Activated CD8-positive, alpha-beta T cell treated with anti-CD3 and anti-CD28 coated beads, Interleukin-2, amount 10 ng/mL, durations not matched to agents 7 days and 5 days (primary cell): ENCODE measurements at regions of chr17 and their contacts with region 1.

Region 1: DNA sequence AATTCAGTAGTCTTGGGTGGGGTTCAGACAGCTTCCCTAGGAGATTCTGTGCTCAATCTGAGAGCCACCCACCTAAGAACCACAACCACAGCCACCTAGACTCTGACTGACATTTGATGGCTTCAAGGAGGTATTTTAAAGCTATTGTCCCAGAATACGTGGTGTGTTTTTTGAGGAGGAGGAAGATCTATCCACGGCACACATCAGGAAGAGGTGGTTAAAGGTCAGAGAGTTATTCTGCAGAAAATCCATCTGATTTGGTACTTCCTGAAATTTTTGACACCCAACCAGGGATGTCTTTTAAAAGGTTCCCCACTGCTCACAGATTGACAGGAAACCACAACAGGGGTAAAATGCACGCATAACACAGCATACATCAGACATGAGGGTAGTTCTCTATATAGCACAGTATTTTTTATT is 25.1 kb downstream of the SMARCE1 start:
- DNase-seq: peak; percentile 69
- ATAC-seq: peak; percentile 74
- H3K4me3 Mint-ChIP-seq: peak overlapping the region; percentile 20
- H3K27ac Mint-ChIP-seq: peak overlapping the region; percentile 57
- H3K4me1 Mint-ChIP-seq: peaks cover 70% of the 10 kb centered on the region
- H3K27me3 Mint-ChIP-seq: no peaks in the 10 kb centered on the region

Region 2: DNA sequence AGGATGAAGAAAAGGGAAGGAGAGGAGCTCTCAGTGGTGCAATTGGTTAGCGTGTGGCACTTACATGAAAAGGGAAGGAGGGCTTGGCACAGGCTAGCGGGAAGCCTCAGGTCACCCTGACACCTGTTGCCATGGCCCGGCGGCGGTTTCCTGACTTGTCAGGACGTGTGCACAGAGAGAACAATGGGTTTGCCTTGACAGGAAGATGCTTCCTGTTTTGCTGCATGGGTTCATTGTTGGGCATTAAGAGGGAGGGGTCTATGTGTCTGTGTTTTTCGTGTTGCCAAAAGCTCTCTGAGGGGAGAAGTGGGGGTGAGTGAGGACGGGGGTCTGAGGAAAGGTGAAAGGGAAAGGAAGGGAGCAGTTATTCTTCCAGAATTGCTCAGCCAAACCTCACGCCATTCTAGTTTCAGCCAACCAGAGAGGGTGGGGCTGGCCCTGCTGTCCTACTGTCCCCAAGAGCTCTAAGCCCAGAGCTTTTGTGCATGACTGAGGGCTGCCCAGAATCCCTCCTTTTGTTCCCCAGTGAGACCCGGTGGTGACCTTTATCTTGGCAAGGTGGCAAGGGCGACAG is 40.1 kb before region 1 on chr17:
- CTCF ChIA-PET with region 1: interaction called, 15 read pairs
- POLR2A ChIA-PET with region 1: no interaction called
- DNase-seq: peak; percentile 83
- ATAC-seq: peak; percentile 83
- H3K4me3 Mint-ChIP-seq: peak overlapping the region; percentile 56
- H3K27ac Mint-ChIP-seq: peak overlapping the region; percentile 88
- H3K4me1 Mint-ChIP-seq: peaks cover 92% of the 10 kb centered on the region
- H3K27me3 Mint-ChIP-seq: no peaks in the 10 kb centered on the region

Region 3: DNA sequence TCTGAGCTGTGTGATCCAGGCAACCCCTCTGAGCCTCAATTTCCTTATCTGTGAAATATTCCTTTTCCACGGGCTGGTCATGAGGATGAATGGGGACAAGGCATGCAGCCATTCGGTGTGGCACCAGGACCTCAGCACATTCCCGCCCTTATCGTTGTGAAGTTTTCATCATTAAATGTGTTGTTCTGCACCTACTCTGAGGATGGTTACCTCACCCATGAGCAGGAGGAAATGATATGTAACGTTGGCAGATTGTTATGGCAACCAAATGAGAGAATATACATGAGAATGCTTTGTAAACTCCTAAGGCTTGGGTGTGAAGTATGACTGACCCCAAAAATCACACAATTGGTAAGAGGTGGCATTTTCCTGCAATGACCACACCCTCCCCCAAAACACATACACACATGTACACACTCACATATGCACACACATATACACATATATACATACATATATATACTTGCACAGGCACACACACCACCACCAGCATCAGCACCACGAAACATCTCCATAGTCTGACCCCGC is 14.4 kb before region 1 on chr17:
- CTCF ChIA-PET with region 1: interaction called, 31 read pairs
- POLR2A ChIA-PET with region 1: interaction called, 10 read pairs
- DNase-seq: peak; percentile 59
- ATAC-seq: peak; percentile 73
- H3K4me3 Mint-ChIP-seq: peak overlapping the region; percentile 44
- H3K27ac Mint-ChIP-seq: peak overlapping the region; percentile 88
- H3K4me1 Mint-ChIP-seq: peaks cover 98% of the 10 kb centered on the region
- H3K27me3 Mint-ChIP-seq: no peaks in the 10 kb centered on the region

Region 4: DNA sequence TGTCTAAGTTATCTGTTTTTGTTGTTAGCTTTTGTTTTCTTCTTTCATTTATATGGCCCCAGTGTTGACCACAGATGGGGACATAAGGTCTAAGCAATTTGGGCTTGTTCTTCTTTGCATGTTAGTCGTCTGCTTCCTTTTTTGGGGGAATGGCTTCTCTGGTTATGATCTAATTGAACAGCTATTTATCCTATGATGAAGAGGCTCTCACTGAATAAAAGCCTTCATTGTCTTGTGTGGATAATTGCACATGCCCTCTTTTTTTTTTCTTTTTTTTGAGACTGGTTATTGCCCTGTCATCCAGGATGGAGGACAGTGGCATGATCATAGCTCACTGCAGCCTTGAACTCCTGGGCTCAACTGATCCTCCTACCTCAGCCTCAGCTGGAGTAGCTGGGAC is 11.4 kb after region 1 on chr17:
- CTCF ChIA-PET with region 1: interaction called, 17 read pairs
- POLR2A ChIA-PET with region 1: interaction called, 3 read pairs
- DNase-seq: no peak
- ATAC-seq: no peak
- H3K4me3 Mint-ChIP-seq: no peak overlapping the region
- H3K27ac Mint-ChIP-seq: peak overlapping the region; percentile 12
- H3K4me1 Mint-ChIP-seq: peaks cover 7% of the 10 kb centered on the region
- H3K27me3 Mint-ChIP-seq: no peaks in the 10 kb centered on the region

Region 5: GRCh38 chr17:40647624-40648383 is 25.3 kb after region 1 on chr17 and contains the start of gene SMARCE1:
- CTCF ChIA-PET with region 1: interaction called, 20 read pairs
- POLR2A ChIA-PET with region 1: interaction called, 10 read pairs
- DNase-seq: peak; percentile 78
- ATAC-seq: peak; percentile 79
- H3K4me3 Mint-ChIP-seq: peak within 1 kb of the TSS; percentile 96
- H3K27ac Mint-ChIP-seq: peak within 1 kb of the TSS; percentile 97
- H3K4me1 Mint-ChIP-seq: peaks cover 45% of the 10 kb centered on the region
- H3K27me3 Mint-ChIP-seq: no peaks in the 10 kb centered on the region
- total RNA-seq, gene SMARCE1: 104 to 110 TPM

Region 6: DNA sequence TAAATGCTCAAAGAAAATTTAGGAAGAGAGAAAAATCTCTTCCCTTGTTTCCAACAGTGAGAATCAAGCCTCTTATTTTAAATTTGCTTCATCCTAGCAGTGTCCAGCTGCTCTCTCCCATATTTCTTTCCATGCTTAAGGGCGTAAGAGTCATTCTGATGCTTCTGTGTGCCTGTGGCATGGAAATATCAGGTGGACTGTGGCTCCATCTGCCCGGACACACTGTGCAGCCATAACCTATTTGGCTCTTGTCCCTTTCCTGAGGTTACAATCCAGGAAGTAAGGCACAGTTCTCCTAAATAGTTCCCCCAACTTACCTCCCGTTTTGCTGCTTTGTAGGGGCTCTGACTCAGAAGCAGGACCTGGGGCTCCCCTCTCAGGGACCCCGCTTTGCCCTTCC is 48.8 kb after region 1 on chr17:
- CTCF ChIA-PET with region 1: no interaction called
- POLR2A ChIA-PET with region 1: no interaction called
- DNase-seq: no peak
- ATAC-seq: no peak
- H3K4me3 Mint-ChIP-seq: no peak overlapping the region
- H3K27ac Mint-ChIP-seq: no peak overlapping the region
- H3K4me1 Mint-ChIP-seq: no peaks in the 10 kb centered on the region
- H3K27me3 Mint-ChIP-seq: peaks cover 37% of the 10 kb centered on the region

Region 7: GRCh38 chr17:40718934-40719333 is 96.4 kb after region 1 on chr17:
- CTCF ChIA-PET with region 1: no interaction called
- POLR2A ChIA-PET with region 1: no interaction called
- DNase-seq: no peak
- ATAC-seq: no peak
- H3K4me3 Mint-ChIP-seq: no peak overlapping the region
- H3K27ac Mint-ChIP-seq: no peak overlapping the region
- H3K4me1 Mint-ChIP-seq: no peaks in the 10 kb centered on the region
- H3K27me3 Mint-ChIP-seq: peaks cover 22% of the 10 kb centered on the region

Region 8: GRCh38 chr17:40735016-40735415 is 112.5 kb after region 1 on chr17:
- CTCF ChIA-PET with region 1: no interaction called
- POLR2A ChIA-PET with region 1: no interaction called
- DNase-seq: no peak
- ATAC-seq: no peak
- H3K4me3 Mint-ChIP-seq: no peak overlapping the region
- H3K27ac Mint-ChIP-seq: no peak overlapping the region
- H3K4me1 Mint-ChIP-seq: no peaks in the 10 kb centered on the region
- H3K27me3 Mint-ChIP-seq: peaks cover 31% of the 10 kb centered on the region